GM12878 (cell line): ENCODE measurements at regions of chr21 and their contacts with region 1.

Region 1: DNA sequence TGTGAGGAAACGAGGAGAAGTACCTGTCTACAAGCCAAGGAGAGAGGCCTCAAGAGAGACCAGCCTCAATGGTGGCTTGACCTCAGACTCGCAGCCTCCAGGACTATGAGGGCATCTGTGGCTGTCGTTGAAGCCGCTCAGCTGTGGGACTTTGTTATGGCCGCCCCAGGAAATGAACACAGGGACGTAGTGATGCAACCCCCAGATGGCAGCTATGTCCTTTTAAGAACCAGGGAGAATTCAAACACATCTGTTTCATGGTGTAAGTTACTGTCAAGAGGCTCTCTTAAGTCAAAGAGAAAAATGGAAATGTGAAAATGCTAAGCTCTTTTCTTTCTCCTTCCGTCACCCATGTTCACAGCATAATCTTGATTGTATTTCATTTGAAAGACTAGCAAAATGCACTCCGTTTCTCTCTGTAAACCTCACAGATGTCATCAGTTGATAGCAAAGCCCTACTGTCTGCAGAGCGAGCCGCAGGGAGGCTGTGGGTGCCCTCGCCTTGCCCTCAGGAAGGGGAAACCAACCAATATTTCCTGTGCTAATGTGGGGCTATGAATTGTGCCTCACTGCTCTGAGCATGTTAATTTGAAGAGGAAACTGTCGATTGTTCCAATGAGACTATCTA is 21.3 kb downstream of the UBASH3A start:
- DNase-seq: no peak
- ATAC-seq: peak; percentile 66
- H3K4me3 ChIP-seq: 0 out of 2 replicates have a peak overlapping the region, but pooled peaks have one; percentile 5
- H3K27ac ChIP-seq: peak overlapping the region; percentile 89
- H3K4me1 ChIP-seq: peaks cover 53% of the 10 kb centered on the region
- H3K27me3 ChIP-seq: no peaks in the 10 kb centered on the region
- CTCF ChIP-seq: no peak
- EP300 ChIP-seq: no peak
- POLR2A ChIP-seq: no peak; the same call in 1 of the 2 replicates
- RAD21 ChIP-seq: 0 out of 2 replicates have a peak, but pooled peaks have one; percentile 4

Region 2: DNA sequence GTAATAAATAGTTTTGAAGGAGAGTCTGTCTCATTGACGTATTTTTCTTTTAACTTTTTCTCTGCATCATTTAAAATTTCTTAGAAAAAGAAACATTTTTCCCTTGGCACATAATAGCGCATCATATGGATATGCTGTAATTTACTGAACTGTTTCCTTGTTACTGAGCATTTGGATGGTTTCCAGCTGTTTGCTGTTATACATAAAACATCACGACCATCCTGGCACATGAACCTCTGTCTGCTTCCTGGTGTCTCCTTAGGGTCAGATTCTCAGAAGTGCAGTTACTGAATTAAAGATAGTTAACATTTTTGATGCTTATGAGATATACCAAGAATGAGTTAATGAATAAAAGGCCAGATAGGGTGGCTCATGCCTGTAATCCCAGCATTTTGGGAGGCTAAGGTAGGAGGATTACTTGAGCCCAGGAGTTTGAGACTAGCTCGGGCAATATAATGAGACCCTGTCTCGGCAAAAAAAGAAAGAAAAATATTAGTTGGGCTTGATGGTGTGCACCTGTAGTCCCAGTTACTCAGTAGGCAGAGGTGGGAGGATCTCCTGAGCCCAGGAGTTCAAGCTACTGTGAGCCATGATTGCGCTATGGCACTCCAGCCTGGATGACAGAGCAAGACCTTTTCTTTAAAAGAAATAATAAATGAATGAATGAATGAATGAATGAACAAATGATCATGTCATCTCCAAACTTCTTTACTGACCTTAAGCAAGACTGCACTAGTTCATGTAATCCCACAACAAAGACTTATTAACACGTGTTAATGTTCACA is 1189.6 kb before region 1 on chr21:
- CTCF ChIA-PET with region 1: no interaction called
- POLR2A ChIA-PET with region 1: no interaction called
- RAD21 ChIA-PET with region 1: no interaction called
- SMC1A ChIA-PET with region 1: no interaction called
- in situ Hi-C with region 1: no loop called
- intact Hi-C with region 1: no loop called
- DNase-seq: no peak
- ATAC-seq: no peak
- H3K4me3 ChIP-seq: no peak overlapping the region
- H3K27ac ChIP-seq: no peak overlapping the region
- H3K4me1 ChIP-seq: no peaks in the 10 kb centered on the region
- H3K27me3 ChIP-seq: peaks cover 0 to 6% of the 10 kb centered on the region in 2 experiments; a peak in 2 of 4 replicates
- CTCF ChIP-seq: no peak
- EP300 ChIP-seq: no peak
- POLR2A ChIP-seq: no peak
- RAD21 ChIP-seq: no peak

Region 3: DNA sequence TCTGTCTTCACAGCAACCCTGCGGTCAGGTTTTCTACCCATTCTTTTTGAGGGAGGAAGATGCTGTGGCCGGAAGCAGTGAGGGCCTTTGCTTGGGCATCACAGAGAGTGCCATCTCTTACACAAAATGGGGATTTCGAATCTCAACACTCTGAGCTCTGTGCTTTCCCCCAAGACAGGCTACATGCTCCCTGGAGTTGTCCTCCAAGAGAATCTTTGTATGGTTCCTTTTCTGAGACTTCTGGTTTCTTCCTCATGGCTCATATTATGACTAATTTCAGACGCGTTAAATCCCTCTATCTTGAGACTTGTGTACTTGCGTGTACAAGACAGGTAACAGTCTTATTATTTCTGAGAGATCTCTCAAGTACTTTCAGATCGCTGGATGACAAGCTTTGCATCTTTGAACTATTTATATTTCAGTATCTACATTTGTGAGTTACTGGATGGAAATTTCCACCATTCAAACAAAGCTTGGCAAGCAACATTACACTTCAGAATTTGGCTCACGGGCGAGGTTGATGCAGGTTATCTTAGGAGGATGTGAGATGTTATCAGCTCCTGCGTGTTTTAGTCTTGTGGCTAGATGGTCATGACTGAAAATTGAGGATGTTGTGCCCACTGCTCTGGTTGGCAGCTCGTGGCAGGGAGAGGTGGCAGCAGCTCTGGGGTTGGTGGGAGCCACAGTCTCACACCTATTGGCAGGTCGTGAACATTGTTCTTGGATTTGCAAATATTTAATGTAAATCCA is 186.7 kb before region 1 on chr21:
- CTCF ChIA-PET with region 1: no interaction called
- POLR2A ChIA-PET with region 1: no interaction called
- RAD21 ChIA-PET with region 1: interaction called, 11 read pairs
- SMC1A ChIA-PET with region 1: interaction called, 4 read pairs
- in situ Hi-C with region 1: no loop called
- intact Hi-C with region 1: no loop called
- DNase-seq: peak; percentile 57
- ATAC-seq: peak; percentile 39
- H3K4me3 ChIP-seq: no peak overlapping the region
- H3K27ac ChIP-seq: peak overlapping the region; percentile 22
- H3K4me1 ChIP-seq: peaks cover 65% of the 10 kb centered on the region
- H3K27me3 ChIP-seq: no peaks in the 10 kb centered on the region
- CTCF ChIP-seq: no peak
- EP300 ChIP-seq: peak; percentile 25 to 39; a peak in 1 of 4 replicates
- POLR2A ChIP-seq: no peak
- RAD21 ChIP-seq: no peak

Region 4: GRCh38 chr21:42381334-42381984 is 43.6 kb before region 1 on chr21:
- CTCF ChIA-PET with region 1: interaction called, 15 read pairs
- POLR2A ChIA-PET with region 1: no interaction called
- RAD21 ChIA-PET with region 1: interaction called, 4 read pairs
- SMC1A ChIA-PET with region 1: interaction called, 10 read pairs
- in situ Hi-C with region 1: no loop called
- intact Hi-C with region 1: no loop called
- DNase-seq: no peak
- ATAC-seq: peak; percentile 62
- H3K4me3 ChIP-seq: no peak overlapping the region
- H3K27ac ChIP-seq: no peak overlapping the region
- H3K4me1 ChIP-seq: 0 out of 2 replicates have a peak, but pooled peaks cover 3% of the 10 kb centered on the region
- H3K27me3 ChIP-seq: no peaks in the 10 kb centered on the region
- CTCF ChIP-seq: peak; percentile 38 to 59 (median 49); a peak in 5 of 6 replicates
- EP300 ChIP-seq: no peak
- POLR2A ChIP-seq: no peak
- RAD21 ChIP-seq: peak; percentile 58

Region 5: DNA sequence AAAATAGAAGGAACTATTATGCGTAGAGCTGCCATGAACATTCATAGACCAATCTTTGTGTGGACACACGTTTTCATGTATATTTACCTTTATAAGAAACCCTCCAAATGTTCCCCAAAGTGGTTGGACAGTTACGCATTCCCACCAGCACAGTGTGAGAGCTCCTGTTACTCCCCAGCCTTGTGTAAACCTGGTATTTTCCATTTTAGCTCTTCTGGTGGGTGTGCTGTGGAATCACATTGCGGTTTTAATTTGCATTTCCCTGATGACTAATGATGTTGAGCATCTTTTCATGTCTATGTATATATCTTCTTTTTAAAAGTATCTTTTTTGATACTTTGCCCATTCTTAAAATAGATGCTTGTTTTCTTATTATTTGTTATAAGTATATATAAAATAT is 24.5 kb before region 1 on chr21:
- CTCF ChIA-PET with region 1: interaction called, 3 read pairs
- POLR2A ChIA-PET with region 1: interaction called, 16 read pairs
- RAD21 ChIA-PET with region 1: interaction called, 10 read pairs
- SMC1A ChIA-PET with region 1: interaction called, 18 read pairs
- in situ Hi-C with region 1: no loop called
- intact Hi-C with region 1: no loop called
- DNase-seq: peak; percentile 68
- ATAC-seq: peak; percentile 82
- H3K4me3 ChIP-seq: no peak overlapping the region
- H3K27ac ChIP-seq: peak overlapping the region; percentile 2; the same call in 1 of the 2 replicates
- H3K4me1 ChIP-seq: peaks cover 10% of the 10 kb centered on the region; the same call in 1 of the 2 replicates
- H3K27me3 ChIP-seq: no peaks in the 10 kb centered on the region
- CTCF ChIP-seq: no peak
- EP300 ChIP-seq: no peak
- POLR2A ChIP-seq: no peak
- RAD21 ChIP-seq: no peak

Region 6: GRCh38 chr21:42449296-42449927 is 24.4 kb after region 1 on chr21:
- CTCF ChIA-PET with region 1: interaction called, 3 read pairs
- POLR2A ChIA-PET with region 1: no interaction called
- RAD21 ChIA-PET with region 1: interaction called, 8 read pairs
- SMC1A ChIA-PET with region 1: interaction called, 12 read pairs
- in situ Hi-C with region 1: no loop called
- intact Hi-C with region 1: no loop called
- DNase-seq: no peak
- ATAC-seq: peak; percentile 16
- H3K4me3 ChIP-seq: no peak overlapping the region
- H3K27ac ChIP-seq: peak overlapping the region; percentile 43
- H3K4me1 ChIP-seq: peaks cover 17% of the 10 kb centered on the region
- H3K27me3 ChIP-seq: no peaks in the 10 kb centered on the region
- CTCF ChIP-seq: no peak
- EP300 ChIP-seq: no peak
- POLR2A ChIP-seq: no peak
- RAD21 ChIP-seq: no peak

Region 7: DNA sequence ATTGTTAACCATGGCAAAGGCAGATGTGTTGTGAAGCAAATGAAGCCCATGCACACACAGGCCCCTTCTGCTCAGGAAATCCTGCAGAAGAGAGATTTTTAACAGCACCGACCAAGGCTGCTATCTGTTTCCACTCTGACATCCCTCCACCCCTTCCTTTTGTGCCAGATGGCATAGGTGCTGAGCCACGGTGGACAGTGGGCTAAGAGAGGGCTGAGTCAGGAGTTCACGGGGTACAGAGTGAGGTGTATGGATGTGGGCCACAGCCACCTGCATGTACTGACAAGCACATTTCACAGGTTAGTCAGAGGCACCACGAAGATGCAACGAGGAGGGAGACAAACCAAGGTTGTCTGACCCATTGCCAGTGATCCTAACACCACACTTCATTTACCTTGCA is 61.5 kb after region 1 on chr21:
- CTCF ChIA-PET with region 1: no interaction called
- POLR2A ChIA-PET with region 1: no interaction called
- RAD21 ChIA-PET with region 1: no interaction called
- SMC1A ChIA-PET with region 1: no interaction called
- in situ Hi-C with region 1: no loop called
- intact Hi-C with region 1: no loop called
- DNase-seq: no peak
- ATAC-seq: no peak
- H3K4me3 ChIP-seq: no peak overlapping the region
- H3K27ac ChIP-seq: no peak overlapping the region
- H3K4me1 ChIP-seq: peaks cover 5% of the 10 kb centered on the region; the same call in 1 of the 2 replicates
- H3K27me3 ChIP-seq: no peaks in the 10 kb centered on the region; a peak in 1 of 4 replicates
- CTCF ChIP-seq: no peak
- EP300 ChIP-seq: no peak
- POLR2A ChIP-seq: no peak
- RAD21 ChIP-seq: no peak

Region 8: GRCh38 chr21:42873096-42873495 is 448.1 kb after region 1 on chr21:
- CTCF ChIA-PET with region 1: no interaction called
- POLR2A ChIA-PET with region 1: no interaction called
- RAD21 ChIA-PET with region 1: no interaction called
- SMC1A ChIA-PET with region 1: no interaction called
- in situ Hi-C with region 1: no loop called
- intact Hi-C with region 1: no loop called
- DNase-seq: no peak
- ATAC-seq: no peak
- H3K4me3 ChIP-seq: no peak overlapping the region
- H3K27ac ChIP-seq: no peak overlapping the region
- H3K4me1 ChIP-seq: no peaks in the 10 kb centered on the region
- H3K27me3 ChIP-seq: no peaks in the 10 kb centered on the region
- CTCF ChIP-seq: no peak
- EP300 ChIP-seq: no peak
- POLR2A ChIP-seq: no peak
- RAD21 ChIP-seq: no peak